WTC11 (cell line): ENCODE measurements at regions of chr2 and their contacts with region 1.

Region 1: DNA sequence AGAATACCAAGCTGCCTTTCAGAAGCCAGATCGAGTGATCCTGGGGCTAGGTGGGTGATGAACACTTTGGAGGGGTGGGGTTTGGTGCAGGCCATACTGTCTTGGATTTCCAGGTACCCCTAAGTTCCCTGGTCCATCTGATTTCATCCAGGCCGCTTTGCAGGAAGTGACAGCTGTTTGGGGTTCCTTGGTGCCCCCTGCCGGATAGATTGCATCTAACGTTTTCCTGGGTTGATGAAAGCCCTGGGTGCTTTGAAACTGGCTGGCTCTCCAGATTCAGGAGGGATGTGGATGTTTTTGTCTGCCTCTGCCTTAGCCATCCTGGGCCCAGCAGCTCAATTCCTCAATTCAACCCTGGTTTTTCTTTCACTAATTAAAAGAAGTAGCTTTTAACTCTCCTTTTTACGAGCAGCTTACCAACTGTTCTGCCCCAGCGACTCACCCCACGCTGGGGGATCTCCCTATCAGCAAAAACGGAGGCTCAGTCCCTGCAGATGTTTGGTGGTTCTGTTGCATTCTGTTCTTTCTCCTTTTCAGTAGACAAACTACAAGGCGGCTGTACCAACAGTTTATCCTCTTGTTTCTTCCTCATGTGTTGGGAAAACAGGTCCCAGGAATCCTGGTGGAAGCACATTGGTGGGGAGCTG is 37.1 kb downstream of the ARHGEF4 start:
- DNase-seq: peak; percentile 77
- ATAC-seq: peak; percentile 85
- H3K4me3 Mint-ChIP-seq: no peak overlapping the region
- H3K27ac Mint-ChIP-seq: no peak overlapping the region
- H3K4me1 Mint-ChIP-seq: no peaks in the 10 kb centered on the region
- H3K27me3 Mint-ChIP-seq: no peaks in the 10 kb centered on the region
- CTCF ChIP-seq: peak; percentile 34; the same call in 1 of the 2 replicates

Region 2: GRCh38 chr2:130845510-130846085 is 28.2 kb before region 1 on chr2:
- CTCF ChIA-PET with region 1: interaction called, 14 read pairs
- POLR2A ChIA-PET with region 1: no interaction called
- DNase-seq: no peak
- ATAC-seq: no peak
- H3K4me3 Mint-ChIP-seq: no peak overlapping the region
- H3K27ac Mint-ChIP-seq: no peak overlapping the region
- H3K4me1 Mint-ChIP-seq: peaks cover 13% of the 10 kb centered on the region
- H3K27me3 Mint-ChIP-seq: no peaks in the 10 kb centered on the region
- CTCF ChIP-seq: no peak

Region 3: GRCh38 chr2:130850788-130851623 is 22.8 kb before region 1 on chr2:
- CTCF ChIA-PET with region 1: interaction called, 25 read pairs
- POLR2A ChIA-PET with region 1: no interaction called
- DNase-seq: no peak
- ATAC-seq: no peak
- H3K4me3 Mint-ChIP-seq: no peak overlapping the region
- H3K27ac Mint-ChIP-seq: no peak overlapping the region
- H3K4me1 Mint-ChIP-seq: no peaks in the 10 kb centered on the region
- H3K27me3 Mint-ChIP-seq: no peaks in the 10 kb centered on the region
- CTCF ChIP-seq: no peak

Region 4: GRCh38 chr2:130928385-130928784 is 54.6 kb after region 1 on chr2:
- CTCF ChIA-PET with region 1: no interaction called
- POLR2A ChIA-PET with region 1: no interaction called
- DNase-seq: no peak
- ATAC-seq: peak; percentile 91
- H3K4me3 Mint-ChIP-seq: no peak overlapping the region
- H3K27ac Mint-ChIP-seq: no peak overlapping the region
- H3K4me1 Mint-ChIP-seq: peaks cover 12% of the 10 kb centered on the region
- H3K27me3 Mint-ChIP-seq: peaks cover 8% of the 10 kb centered on the region
- CTCF ChIP-seq: no peak